K562 (cell line): ENCODE measurements at regions of chr17 and their contacts with region 1.

Region 1: GRCh38 chr17:59688008-59688407 is 19.2 kb downstream of the PTRH2 start:
- DNase-seq: no peak
- ATAC-seq: no peak
- H3K4me3 ChIP-seq: no peak overlapping the region
- H3K27ac ChIP-seq: peak overlapping the region; percentile 29; the same call in 1 of the 3 replicates
- H3K4me1 ChIP-seq: peaks cover 7 to 28% of the 10 kb centered on the region in 2 experiments; a peak in 4 of 5 replicates
- H3K27me3 ChIP-seq: no peaks in the 10 kb centered on the region
- CTCF ChIP-seq: no peak
- EP300 ChIP-seq: no peak
- POLR2A ChIP-seq: 0 out of 2 replicates have a peak, but pooled peaks have one; percentile 26
- RAD21 ChIP-seq: no peak

Region 2: GRCh38 chr17:59451706-59452105 is 236.3 kb before region 1 on chr17:
- CTCF ChIA-PET with region 1: no interaction called
- POLR2A ChIA-PET with region 1: no interaction called
- in situ Hi-C with region 1: no loop called
- intact Hi-C with region 1: no loop called
- DNase-seq: no peak
- ATAC-seq: no peak
- H3K4me3 ChIP-seq: no peak overlapping the region
- H3K27ac ChIP-seq: no peak overlapping the region
- H3K4me1 ChIP-seq: peaks cover 0 to 3% of the 10 kb centered on the region in 2 experiments; a peak in 3 of 5 replicates
- H3K27me3 ChIP-seq: 0 out of 5 replicates have a peak, but pooled peaks cover 0 to 5% of the 10 kb centered on the region in 2 experiments
- CTCF ChIP-seq: no peak
- EP300 ChIP-seq: no peak
- POLR2A ChIP-seq: no peak
- RAD21 ChIP-seq: no peak

Region 3: GRCh38 chr17:59702304-59702703 is 14.3 kb after region 1 on chr17:
- CTCF ChIA-PET with region 1: no interaction called
- POLR2A ChIA-PET with region 1: interaction called, 19 read pairs
- in situ Hi-C with region 1: no loop called
- intact Hi-C with region 1: loop called (anchors 2 kb)
- DNase-seq: peak; percentile 54 to 90 (median 68)
- ATAC-seq: peak; percentile 45
- H3K4me3 ChIP-seq: peak overlapping the region; percentile 13; the same call in 1 of the 2 replicates
- H3K27ac ChIP-seq: peak overlapping the region; percentile 62
- H3K4me1 ChIP-seq: peaks cover 16 to 47% of the 10 kb centered on the region in 2 experiments; a peak in 3 of 5 replicates
- H3K27me3 ChIP-seq: no peaks in the 10 kb centered on the region
- CTCF ChIP-seq: no peak
- EP300 ChIP-seq: peak; percentile 80
- POLR2A ChIP-seq: no peak
- RAD21 ChIP-seq: no peak

Region 4: DNA sequence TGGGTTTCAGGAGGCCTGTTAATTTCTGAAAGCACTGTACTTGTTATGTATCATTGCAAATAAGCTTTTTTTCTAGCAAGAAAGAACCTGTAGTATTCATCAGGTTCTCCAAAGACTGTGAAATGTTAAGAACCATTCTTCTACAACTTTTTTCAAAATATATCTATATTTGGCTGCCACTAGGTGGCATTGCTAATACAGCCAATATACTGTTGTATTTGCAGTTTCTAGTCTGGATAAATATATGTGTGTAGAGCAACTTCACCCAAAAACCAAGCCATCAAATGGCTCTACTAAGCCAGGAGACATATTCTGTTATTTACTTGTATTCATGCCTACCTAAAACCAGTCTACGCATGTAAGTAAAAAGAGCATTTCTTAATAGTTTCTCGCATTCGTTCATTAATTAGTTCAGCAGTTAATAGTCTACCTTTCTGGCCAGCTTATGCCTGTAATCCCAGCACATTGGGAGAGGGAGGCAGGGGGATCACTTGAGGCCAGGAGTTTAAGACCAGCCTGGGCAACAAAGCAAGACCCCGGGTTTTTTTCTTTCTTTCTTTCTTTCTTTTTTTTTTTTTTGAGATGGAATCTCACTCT is 58.9 kb after region 1 on chr17:
- CTCF ChIA-PET with region 1: no interaction called
- POLR2A ChIA-PET with region 1: no interaction called
- in situ Hi-C with region 1: no loop called
- intact Hi-C with region 1: no loop called
- DNase-seq: peak in 3 of 4 experiments; percentile 14 to 56 (median 22)
- ATAC-seq: peak; percentile 78
- H3K4me3 ChIP-seq: no peak overlapping the region
- H3K27ac ChIP-seq: no peak overlapping the region
- H3K4me1 ChIP-seq: no peaks in the 10 kb centered on the region; a peak in 1 of 5 replicates
- H3K27me3 ChIP-seq: no peaks in the 10 kb centered on the region
- CTCF ChIP-seq: peak; percentile 46 to 74 (median 55); a peak in 4 of 6 replicates
- EP300 ChIP-seq: no peak
- POLR2A ChIP-seq: no peak
- RAD21 ChIP-seq: peak; percentile 58 to 83